Psoas muscle (tissue), 8 donors: ENCODE measurements at regions of chr7 and their contacts with region 1.

Region 1: DNA sequence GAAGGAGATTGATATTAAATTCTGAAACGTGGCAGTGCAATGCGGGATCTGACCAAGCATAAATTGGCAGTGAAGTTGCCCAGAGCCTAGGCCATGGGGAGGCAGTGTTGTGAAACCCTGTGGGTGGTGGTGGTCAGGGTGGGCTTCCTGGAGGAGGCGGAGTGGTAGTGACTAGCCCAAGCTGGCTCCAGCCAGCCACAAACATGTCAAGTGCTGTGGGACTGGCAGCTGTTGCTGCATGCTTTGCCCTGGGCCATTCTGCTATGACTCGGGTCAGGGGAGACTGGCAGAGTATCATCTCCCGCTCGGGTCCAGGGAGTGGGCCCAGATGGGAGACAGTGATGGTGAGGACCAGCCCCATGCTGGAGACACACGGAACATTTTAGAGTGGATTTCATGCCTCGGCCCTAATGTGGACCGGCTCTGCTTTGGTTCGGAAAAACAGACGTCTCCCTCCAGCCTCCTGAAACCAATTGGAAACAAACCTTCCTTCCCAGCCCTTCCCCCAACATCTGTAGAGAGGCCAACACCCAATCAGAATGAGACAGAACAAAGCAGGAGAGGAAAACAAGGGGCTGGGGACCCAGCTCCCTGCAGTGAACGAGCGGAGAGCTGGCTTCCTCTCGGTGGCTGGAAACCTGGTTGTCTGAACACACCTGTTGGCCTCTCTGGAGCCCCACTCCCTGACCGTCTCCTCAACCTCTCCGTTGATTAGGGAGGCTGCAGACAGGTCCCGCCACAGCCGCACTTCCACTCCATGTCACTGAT is 58.2 kb downstream of the TMEM270 start:
- DNase-seq: no peak
- ATAC-seq: no peak
- H3K4me3 ChIP-seq: no peak overlapping the region
- H3K27ac ChIP-seq: no peak overlapping the region
- H3K4me1 ChIP-seq: no peaks in the 10 kb centered on the region
- H3K27me3 ChIP-seq: peaks cover 0 to 6% (median 0%) of the 10 kb centered on the region in 3 donors
- CTCF ChIP-seq: no peak

Region 2: DNA sequence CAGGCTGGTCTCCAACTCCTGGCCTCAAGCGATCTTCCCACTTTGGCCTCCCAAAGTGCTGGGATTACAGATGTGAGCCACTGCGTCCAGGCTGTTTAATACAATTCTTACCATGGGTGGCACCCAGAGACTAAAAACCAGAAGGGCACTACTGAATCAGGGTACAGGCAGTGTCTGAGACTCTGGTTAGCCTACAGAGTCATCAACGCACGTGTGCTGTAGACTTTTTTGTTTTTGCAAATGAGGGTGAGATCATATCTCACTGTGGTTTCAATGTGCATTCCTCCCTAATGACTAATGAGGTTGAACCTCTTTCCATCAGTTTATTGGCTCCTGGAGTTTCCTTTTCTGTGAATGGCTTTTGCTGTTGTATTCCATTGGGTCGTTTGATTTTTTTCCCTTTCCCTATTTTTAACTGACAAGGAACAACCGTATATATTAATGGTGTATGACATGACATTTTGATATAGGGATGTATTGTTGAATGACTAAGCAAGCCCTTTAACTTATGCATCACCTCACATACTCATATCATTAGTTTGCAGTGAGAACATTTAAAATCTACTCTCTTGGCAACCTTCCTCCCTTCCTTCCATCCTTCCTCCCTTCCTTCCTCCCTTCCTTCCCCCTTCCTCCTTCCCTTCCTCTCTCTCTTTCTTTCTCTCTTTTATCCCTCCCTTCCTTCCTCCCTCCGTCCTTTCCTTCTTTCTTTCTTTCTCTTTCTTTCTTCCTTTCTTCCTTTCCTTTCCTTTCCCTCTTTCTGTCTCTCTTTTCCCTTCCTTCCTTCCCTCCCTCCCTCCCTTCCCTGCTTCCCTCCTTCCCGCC is 67.5 kb before region 1 on chr7:
- intact Hi-C with region 1: no loop called
- DNase-seq: no peak
- ATAC-seq: peak; percentile 64 to 76 (median 75)
- H3K4me3 ChIP-seq: no peak overlapping the region
- H3K27ac ChIP-seq: peak overlapping the region; percentile 67
- H3K4me1 ChIP-seq: peaks cover 8% of the 10 kb centered on the region
- H3K27me3 ChIP-seq: peaks cover 0 to 2% (median 0%) of the 10 kb centered on the region in 3 donors
- CTCF ChIP-seq: no peak

Region 3: DNA sequence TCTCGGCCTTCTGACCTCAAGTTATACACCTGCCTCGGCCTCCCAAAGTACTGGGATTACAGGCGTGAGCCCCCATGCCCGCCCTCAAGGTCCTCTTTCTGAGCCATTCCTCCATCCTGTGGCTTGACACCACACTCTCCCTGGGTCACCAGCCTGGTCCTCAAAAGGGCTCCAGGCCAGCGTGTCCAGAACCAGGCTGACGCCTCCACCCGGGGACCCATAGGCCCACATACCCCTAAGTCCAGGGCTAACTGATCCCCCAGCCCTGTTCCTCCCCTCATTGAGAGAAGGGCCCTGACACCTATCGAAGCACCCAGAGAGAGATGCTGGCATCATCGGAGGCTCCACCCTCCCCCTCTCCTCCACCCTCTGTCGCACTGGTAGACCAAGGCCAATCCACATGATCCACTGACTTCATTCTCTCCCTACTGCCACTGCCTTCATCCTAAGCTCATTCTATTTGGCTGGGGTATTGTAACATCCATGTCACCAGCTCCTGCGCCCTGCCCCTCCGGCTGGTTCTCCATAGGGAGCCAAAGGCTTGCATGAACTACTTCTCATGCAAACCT is 11.5 kb before region 1 on chr7:
- intact Hi-C with region 1: loop called in 1 of 2 experiments (anchors 1 kb)
- DNase-seq: no peak
- ATAC-seq: no peak
- H3K4me3 ChIP-seq: no peak overlapping the region
- H3K27ac ChIP-seq: no peak overlapping the region
- H3K4me1 ChIP-seq: no peaks in the 10 kb centered on the region
- H3K27me3 ChIP-seq: no peaks in the 10 kb centered on the region
- CTCF ChIP-seq: no peak